IMR-90 (cell line): ENCODE measurements at regions of chr7 and their contacts with region 1.

Region 1: GRCh38 chr7:73851410-73852234 is 9.3 kb upstream of the METTL27 start:
- DNase-seq: peak; percentile 99
- ATAC-seq: peak; percentile 74
- H3K4me3 ChIP-seq: no peak overlapping the region
- H3K27ac ChIP-seq: peak overlapping the region; percentile 87
- H3K4me1 ChIP-seq: peaks cover 15% of the 10 kb centered on the region
- H3K27me3 ChIP-seq: no peaks in the 10 kb centered on the region
- CTCF ChIP-seq: no peak
- POLR2A ChIP-seq: peak; percentile 78
- RAD21 ChIP-seq: peak; percentile 31

Region 2: DNA sequence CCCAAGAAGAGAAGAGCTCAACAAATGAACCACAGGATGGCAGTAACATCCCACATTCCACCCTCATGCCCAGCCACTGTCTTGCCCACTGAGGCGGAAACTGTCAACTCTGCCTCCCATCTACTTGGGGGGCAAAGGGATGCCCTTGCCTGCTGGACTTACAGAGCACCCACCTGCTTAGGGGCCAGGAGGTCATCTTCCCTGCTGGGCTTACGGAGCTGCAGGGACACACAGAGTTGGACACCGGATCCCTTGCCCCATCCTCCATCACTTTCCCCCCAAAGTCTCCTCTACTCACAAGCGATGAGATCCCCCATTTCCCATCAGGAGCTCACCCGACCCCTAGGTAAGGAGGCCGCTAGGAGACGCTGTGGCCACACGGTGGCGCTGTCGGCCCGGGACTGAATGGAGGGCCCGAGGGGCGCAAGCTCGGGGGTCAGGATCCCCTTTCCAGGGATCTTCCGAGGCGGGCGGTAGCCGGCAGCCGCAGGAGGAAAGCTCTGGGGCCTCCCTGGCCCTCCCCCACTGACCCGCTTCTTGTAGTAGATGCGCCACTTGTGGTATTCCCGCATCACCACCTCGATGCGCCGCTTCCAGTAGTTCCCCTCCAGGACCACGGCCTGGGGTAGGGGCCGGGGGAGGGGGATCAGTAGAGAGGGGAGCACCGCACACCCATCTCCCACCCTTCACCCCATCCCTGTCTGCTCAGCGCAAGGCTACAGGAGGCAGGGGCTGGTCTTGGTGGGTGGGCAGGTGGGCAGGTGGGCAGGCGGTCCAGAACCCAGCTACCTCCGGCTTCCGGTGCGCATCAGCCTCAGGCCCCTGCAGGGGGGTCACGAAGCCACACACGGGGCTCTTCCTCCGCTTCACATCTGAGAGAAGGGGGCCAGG is 244.6 kb before region 1 on chr7:
- CTCF ChIA-PET with region 1: no interaction called
- POLR2A ChIA-PET with region 1: no interaction called
- dilution Hi-C with region 1: no loop called
- in situ Hi-C with region 1: loop called (anchors 10 kb)
- intact Hi-C with region 1: loop called (anchors 5 kb)
- DNase-seq: peak; percentile 10
- ATAC-seq: peak; percentile 84
- H3K4me3 ChIP-seq: no peak overlapping the region
- H3K27ac ChIP-seq: no peak overlapping the region
- H3K4me1 ChIP-seq: no peaks in the 10 kb centered on the region
- H3K27me3 ChIP-seq: peaks cover 13% of the 10 kb centered on the region; the same call in 1 of the 2 replicates
- CTCF ChIP-seq: peak; percentile 89
- POLR2A ChIP-seq: no peak
- RAD21 ChIP-seq: peak; percentile 87

Region 3: DNA sequence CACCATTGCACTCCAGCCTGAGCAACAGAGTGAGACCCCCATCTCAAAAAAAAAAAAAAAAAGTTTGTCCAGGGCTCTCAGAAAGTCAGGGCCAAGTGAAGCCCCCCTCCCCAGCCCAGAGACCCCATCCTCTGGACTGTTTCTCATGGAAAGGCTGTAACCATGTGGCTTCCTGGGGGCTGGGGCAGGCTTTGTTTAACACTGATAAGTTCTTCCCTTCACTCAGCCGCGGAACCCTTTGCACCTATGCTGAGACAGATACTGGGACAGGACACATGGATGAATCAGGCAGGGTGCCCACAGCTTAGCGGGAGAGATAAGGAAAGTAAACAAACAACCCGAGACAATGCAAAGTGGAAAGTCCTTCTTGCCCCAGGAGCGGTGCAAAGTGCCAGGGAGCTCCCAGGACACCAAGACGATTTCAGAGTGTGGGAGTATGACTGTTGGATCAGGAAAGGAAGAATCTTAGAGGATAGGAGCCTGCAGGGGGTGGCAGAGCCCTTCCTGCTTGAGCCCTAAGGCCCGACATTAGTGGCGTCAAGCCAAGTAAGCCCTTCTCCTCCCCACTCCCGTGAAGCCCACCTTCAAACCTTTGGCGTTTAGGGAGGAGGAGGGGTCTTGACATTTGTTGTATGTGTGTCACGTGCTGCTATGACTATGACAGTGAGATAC is 238.9 kb before region 1 on chr7:
- CTCF ChIA-PET with region 1: no interaction called
- POLR2A ChIA-PET with region 1: no interaction called
- dilution Hi-C with region 1: no loop called
- in situ Hi-C with region 1: loop called (anchors 10 kb)
- intact Hi-C with region 1: loop called (anchors 5 kb)
- DNase-seq: peak; percentile 29
- ATAC-seq: peak; percentile 87
- H3K4me3 ChIP-seq: no peak overlapping the region
- H3K27ac ChIP-seq: no peak overlapping the region
- H3K4me1 ChIP-seq: no peaks in the 10 kb centered on the region
- H3K27me3 ChIP-seq: peaks cover 17% of the 10 kb centered on the region
- CTCF ChIP-seq: peak; percentile 44
- POLR2A ChIP-seq: no peak
- RAD21 ChIP-seq: peak; percentile 49; the same call in 1 of the 2 replicates

Region 4: GRCh38 chr7:73683056-73683964 is 168.3 kb before region 1 on chr7 and contains the starts of genes BUD23 and DNAJC30:
- CTCF ChIA-PET with region 1: no interaction called
- POLR2A ChIA-PET with region 1: no interaction called
- dilution Hi-C with region 1: no loop called
- in situ Hi-C with region 1: no loop called
- intact Hi-C with region 1: loop called (anchors 2 kb)
- DNase-seq: peak; percentile 95
- ATAC-seq: peak; percentile 98
- H3K4me3 ChIP-seq: peak within 1 kb of the TSS; percentile 96
- H3K27ac ChIP-seq: peak within 1 kb of the TSS; percentile 93
- H3K4me1 ChIP-seq: peaks cover 13% of the 10 kb centered on the region
- H3K27me3 ChIP-seq: no peaks in the 10 kb centered on the region
- CTCF ChIP-seq: no peak
- POLR2A ChIP-seq: peak; percentile 93
- RAD21 ChIP-seq: no peak
- total RNA-seq, gene BUD23: 35.7 and 40.8 TPM in 2 replicates
- total RNA-seq, gene DNAJC30: 1.6 and 1.7 TPM in 2 replicates

Region 5: DNA sequence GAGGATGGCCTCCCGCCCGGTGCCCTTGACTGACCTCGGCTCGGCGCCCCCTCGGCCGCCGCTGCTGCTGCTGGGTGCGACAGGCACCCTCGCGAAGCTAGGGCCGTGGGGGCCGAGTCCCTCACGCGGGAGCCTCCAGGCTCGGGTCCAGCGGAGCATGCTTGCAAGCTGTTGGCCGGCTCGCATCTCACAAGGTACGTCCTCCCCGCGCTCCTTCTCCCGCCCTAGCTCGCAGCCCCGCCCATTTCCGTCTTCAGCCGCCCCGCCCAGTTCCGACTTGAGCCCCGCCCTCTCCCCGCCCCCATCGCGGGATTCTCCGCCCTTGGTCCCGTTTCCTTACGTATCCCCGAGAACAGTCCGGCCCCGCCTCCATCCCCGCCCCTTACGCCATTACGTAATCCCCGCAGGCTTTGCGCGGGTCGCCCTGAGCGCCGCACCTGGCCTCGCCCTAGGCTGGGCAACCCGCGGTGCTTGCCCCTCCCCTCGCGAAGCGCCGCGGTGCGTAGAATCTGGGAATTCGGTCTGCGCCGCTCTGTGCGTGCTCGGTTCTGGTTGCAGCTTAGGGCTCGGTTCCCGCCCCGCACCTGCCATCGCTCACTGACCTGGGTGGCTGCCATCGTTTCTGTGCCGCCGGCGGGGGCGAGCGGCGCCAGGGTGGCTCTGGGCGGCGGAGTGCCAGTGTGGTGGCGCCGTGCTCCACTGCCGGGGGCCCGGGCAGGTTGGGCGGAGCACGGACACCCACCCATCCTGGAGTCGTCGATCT is 112.8 kb before region 1 on chr7 and contains the start of gene ABHD11:
- CTCF ChIA-PET with region 1: no interaction called
- POLR2A ChIA-PET with region 1: no interaction called
- dilution Hi-C with region 1: no loop called
- in situ Hi-C with region 1: no loop called
- intact Hi-C with region 1: loop called (anchors 5 kb)
- DNase-seq: peak; percentile 93
- ATAC-seq: peak; percentile 94
- H3K4me3 ChIP-seq: peak within 1 kb of the TSS; percentile 99
- H3K27ac ChIP-seq: peak within 1 kb of the TSS; percentile 69
- H3K4me1 ChIP-seq: peaks cover 7% of the 10 kb centered on the region
- H3K27me3 ChIP-seq: no peaks in the 10 kb centered on the region
- CTCF ChIP-seq: no peak
- POLR2A ChIP-seq: 0 out of 2 replicates have a peak, but pooled peaks have one; percentile 40
- RAD21 ChIP-seq: no peak
- total RNA-seq, gene ABHD11: 13.4 and 14.2 TPM in 2 replicates

Region 6: DNA sequence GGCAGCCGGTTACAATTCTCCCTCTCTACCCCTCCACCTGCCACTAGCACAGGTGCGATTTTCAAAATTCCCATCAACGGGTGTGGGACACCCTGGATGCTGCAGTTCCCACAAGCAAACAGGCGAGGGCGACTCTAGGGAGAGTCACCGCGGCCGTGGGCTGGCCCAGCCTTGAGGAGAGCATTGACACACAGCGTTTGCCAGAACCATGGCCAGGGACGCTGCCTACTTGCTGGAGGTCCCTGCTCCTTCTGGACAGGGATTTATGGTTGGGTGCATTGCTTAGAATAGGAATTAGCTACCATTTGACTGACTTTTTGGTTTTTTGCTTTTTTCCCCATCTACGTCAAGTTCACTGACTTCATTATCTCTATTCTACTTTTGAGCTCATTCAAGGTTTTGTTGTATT is 39.9 kb before region 1 on chr7:
- CTCF ChIA-PET with region 1: interaction called, 5 read pairs
- POLR2A ChIA-PET with region 1: no interaction called
- dilution Hi-C with region 1: no loop called
- in situ Hi-C with region 1: no loop called
- intact Hi-C with region 1: loop called (anchors 1 kb)
- DNase-seq: peak; percentile 41
- ATAC-seq: peak; percentile 93
- H3K4me3 ChIP-seq: no peak overlapping the region
- H3K27ac ChIP-seq: no peak overlapping the region
- H3K4me1 ChIP-seq: 0 out of 2 replicates have a peak, but pooled peaks cover 2% of the 10 kb centered on the region
- H3K27me3 ChIP-seq: no peaks in the 10 kb centered on the region
- CTCF ChIP-seq: peak; percentile 71
- POLR2A ChIP-seq: no peak
- RAD21 ChIP-seq: peak; percentile 81